GM12878 (cell line): ENCODE measurements at regions of chr9 and their contacts with region 1.

Region 1: DNA sequence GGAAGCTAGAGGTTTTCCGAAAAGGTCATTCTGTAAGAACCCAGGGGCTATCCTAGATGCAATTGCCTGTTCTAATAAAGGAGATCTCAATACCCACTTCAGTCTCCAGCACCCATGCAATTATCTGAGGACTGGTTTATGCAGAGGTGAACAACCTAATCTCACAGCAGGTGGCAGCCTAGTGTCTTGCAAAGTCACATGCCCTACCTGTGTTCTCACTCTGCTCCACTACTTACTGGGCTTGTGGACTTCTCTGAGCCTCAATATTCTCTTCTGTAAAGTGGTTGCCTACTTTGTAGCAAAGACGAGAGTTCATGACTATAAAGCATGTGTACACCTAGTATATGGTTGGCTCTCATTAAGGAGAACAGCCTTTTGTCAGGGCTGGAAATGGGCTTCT is 21.0 kb upstream of the ALDH1B1 start:
- DNase-seq: peak; percentile 23
- ATAC-seq: peak; percentile 96
- H3K4me3 ChIP-seq: no peak overlapping the region
- H3K27ac ChIP-seq: no peak overlapping the region
- H3K4me1 ChIP-seq: no peaks in the 10 kb centered on the region
- H3K27me3 ChIP-seq: no peaks in the 10 kb centered on the region; a peak in 4 of 4 replicates
- CTCF ChIP-seq: peak; percentile 60 to 80 (median 64); a peak in 5 of 6 replicates
- EP300 ChIP-seq: no peak
- POLR2A ChIP-seq: no peak
- RAD21 ChIP-seq: peak; percentile 77

Region 2: DNA sequence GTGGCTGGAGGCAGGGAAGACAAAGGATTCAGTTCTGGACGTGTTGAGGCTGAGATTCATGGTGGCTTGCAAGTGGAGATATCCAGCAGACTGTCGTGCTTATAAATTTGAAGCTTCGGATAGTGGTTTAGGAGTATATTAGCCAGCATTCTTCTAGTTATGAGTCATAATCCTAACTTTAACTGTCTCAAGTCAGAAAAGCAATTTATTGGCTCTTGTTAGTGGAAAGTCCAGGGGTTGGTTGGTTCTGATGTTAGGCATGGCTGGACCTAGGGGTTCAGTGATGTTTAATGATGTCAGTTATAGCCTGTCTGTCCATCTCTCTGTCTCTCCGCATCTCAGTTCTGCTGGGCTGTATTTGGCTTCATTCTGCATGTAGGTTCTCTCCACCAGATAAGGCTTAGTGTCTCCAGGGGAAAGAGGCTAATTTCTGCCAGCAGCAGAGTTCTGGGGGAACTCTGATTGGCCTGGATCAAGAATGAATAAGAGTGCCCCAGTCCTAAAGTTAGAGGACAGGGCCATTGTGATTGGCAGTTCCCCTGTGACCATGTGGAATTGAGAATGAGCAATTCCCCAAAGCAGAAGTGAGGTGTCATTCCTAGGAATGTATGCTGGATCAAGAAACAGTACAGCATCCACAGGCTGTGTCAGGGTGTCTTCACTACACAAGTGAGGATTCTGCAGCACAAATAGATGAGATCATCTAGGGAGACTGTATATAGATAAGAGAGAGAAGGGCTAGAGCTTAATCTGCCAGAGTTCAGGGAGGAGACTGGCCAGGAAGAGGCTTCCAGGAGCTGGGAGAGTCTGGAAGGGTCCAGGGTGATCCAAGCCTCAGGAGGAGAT is 229.5 kb before region 1 on chr9:
- CTCF ChIA-PET with region 1: no interaction called
- POLR2A ChIA-PET with region 1: no interaction called
- RAD21 ChIA-PET with region 1: no interaction called
- SMC1A ChIA-PET with region 1: no interaction called
- in situ Hi-C with region 1: no loop called
- intact Hi-C with region 1: no loop called
- DNase-seq: no peak
- ATAC-seq: peak; percentile 76
- H3K4me3 ChIP-seq: no peak overlapping the region
- H3K27ac ChIP-seq: no peak overlapping the region
- H3K4me1 ChIP-seq: no peaks in the 10 kb centered on the region
- H3K27me3 ChIP-seq: peaks cover 0 to 1% of the 10 kb centered on the region in 2 experiments; a peak in 1 of 4 replicates
- CTCF ChIP-seq: no peak
- EP300 ChIP-seq: 0 out of 4 replicates have a peak, but pooled peaks of 1 of the 2 experiments have one; percentile 39
- POLR2A ChIP-seq: no peak
- RAD21 ChIP-seq: no peak

Region 3: GRCh38 chr9:38311382-38312270 is 59.9 kb before region 1 on chr9:
- CTCF ChIA-PET with region 1: no interaction called
- POLR2A ChIA-PET with region 1: no interaction called
- RAD21 ChIA-PET with region 1: no interaction called
- SMC1A ChIA-PET with region 1: no interaction called
- in situ Hi-C with region 1: no loop called
- intact Hi-C with region 1: no loop called
- DNase-seq: no peak
- ATAC-seq: no peak
- H3K4me3 ChIP-seq: no peak overlapping the region
- H3K27ac ChIP-seq: no peak overlapping the region
- H3K4me1 ChIP-seq: no peaks in the 10 kb centered on the region
- H3K27me3 ChIP-seq: no peaks in the 10 kb centered on the region; a peak in 2 of 4 replicates
- CTCF ChIP-seq: no peak
- EP300 ChIP-seq: no peak
- POLR2A ChIP-seq: no peak
- RAD21 ChIP-seq: no peak

Region 4: DNA sequence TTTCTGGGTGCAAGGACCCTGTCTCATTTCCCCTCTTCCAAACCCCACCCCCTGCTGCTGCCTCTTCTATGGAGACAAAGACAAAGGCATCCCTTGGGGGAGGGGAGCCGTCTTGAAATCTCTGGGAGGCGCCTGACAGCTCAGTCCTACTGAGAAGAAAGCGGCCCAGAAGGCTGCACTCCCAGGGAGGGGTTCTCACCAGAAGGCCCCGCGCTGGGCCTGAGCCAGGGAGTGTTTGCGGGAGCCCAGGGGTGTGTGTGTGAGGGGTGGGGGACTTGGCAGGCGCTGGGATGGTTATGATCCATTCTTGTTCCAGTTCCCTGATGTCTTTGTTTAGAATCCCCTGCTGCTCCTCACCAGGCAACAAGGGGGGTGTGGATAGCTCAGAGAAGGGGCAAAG is 24.7 kb before region 1 on chr9:
- CTCF ChIA-PET with region 1: no interaction called
- POLR2A ChIA-PET with region 1: no interaction called
- RAD21 ChIA-PET with region 1: no interaction called
- SMC1A ChIA-PET with region 1: no interaction called
- in situ Hi-C with region 1: no loop called
- intact Hi-C with region 1: no loop called
- DNase-seq: no peak
- ATAC-seq: no peak
- H3K4me3 ChIP-seq: no peak overlapping the region
- H3K27ac ChIP-seq: no peak overlapping the region
- H3K4me1 ChIP-seq: no peaks in the 10 kb centered on the region
- H3K27me3 ChIP-seq: no peaks in the 10 kb centered on the region; a peak in 1 of 4 replicates
- CTCF ChIP-seq: no peak
- EP300 ChIP-seq: no peak
- POLR2A ChIP-seq: no peak
- RAD21 ChIP-seq: no peak

Region 5: GRCh38 chr9:38392235-38393127 is 21.0 kb after region 1 on chr9 and contains the start of gene ALDH1B1:
- CTCF ChIA-PET with region 1: interaction called, 14 read pairs
- POLR2A ChIA-PET with region 1: interaction called, 5 read pairs
- RAD21 ChIA-PET with region 1: interaction called, 5 read pairs
- SMC1A ChIA-PET with region 1: interaction called, 9 read pairs
- in situ Hi-C with region 1: no loop called
- intact Hi-C with region 1: no loop called
- DNase-seq: peak; percentile 38
- ATAC-seq: peak; percentile 98
- H3K4me3 ChIP-seq: peak within 1 kb of the TSS; percentile 93
- H3K27ac ChIP-seq: peak within 1 kb of the TSS; percentile 77
- H3K4me1 ChIP-seq: peaks cover 3% of the 10 kb centered on the region; the same call in 1 of the 2 replicates
- H3K27me3 ChIP-seq: no peaks in the 10 kb centered on the region
- CTCF ChIP-seq: peak; percentile 10 to 23 (median 16); a peak in 2 of 6 replicates
- EP300 ChIP-seq: no peak
- POLR2A ChIP-seq: peak; percentile 74
- RAD21 ChIP-seq: no peak
- polyA plus RNA-seq, gene ALDH1B1: 8.6 to 14.2 TPM

Region 6: GRCh38 chr9:38405785-38406184 is 34.3 kb after region 1 on chr9:
- CTCF ChIA-PET with region 1: interaction called, 13 read pairs
- POLR2A ChIA-PET with region 1: no interaction called
- RAD21 ChIA-PET with region 1: interaction called, 17 read pairs
- SMC1A ChIA-PET with region 1: interaction called, 9 read pairs
- in situ Hi-C with region 1: no loop called
- intact Hi-C with region 1: loop called (anchors 1 kb)
- DNase-seq: no peak
- ATAC-seq: no peak
- H3K4me3 ChIP-seq: no peak overlapping the region
- H3K27ac ChIP-seq: no peak overlapping the region
- H3K4me1 ChIP-seq: peaks cover 3% of the 10 kb centered on the region; the same call in 1 of the 2 replicates
- H3K27me3 ChIP-seq: no peaks in the 10 kb centered on the region; a peak in 3 of 4 replicates
- CTCF ChIP-seq: no peak
- EP300 ChIP-seq: no peak
- POLR2A ChIP-seq: no peak
- RAD21 ChIP-seq: no peak

Region 7: GRCh38 chr9:38432922-38433510 is 61.5 kb after region 1 on chr9:
- CTCF ChIA-PET with region 1: interaction called, 9 read pairs
- POLR2A ChIA-PET with region 1: no interaction called
- RAD21 ChIA-PET with region 1: interaction called, 8 read pairs
- SMC1A ChIA-PET with region 1: interaction called, 5 read pairs
- in situ Hi-C with region 1: no loop called
- intact Hi-C with region 1: loop called (anchors 1 kb)
- DNase-seq: no peak
- ATAC-seq: peak; percentile 72
- H3K4me3 ChIP-seq: no peak overlapping the region
- H3K27ac ChIP-seq: no peak overlapping the region
- H3K4me1 ChIP-seq: no peaks in the 10 kb centered on the region
- H3K27me3 ChIP-seq: no peaks in the 10 kb centered on the region; a peak in 1 of 4 replicates
- CTCF ChIP-seq: peak; percentile 52 to 61 (median 60)
- EP300 ChIP-seq: no peak
- POLR2A ChIP-seq: no peak
- RAD21 ChIP-seq: peak; percentile 50

Region 8: GRCh38 chr9:38641985-38642864 is 270.7 kb after region 1 on chr9:
- CTCF ChIA-PET with region 1: no interaction called
- POLR2A ChIA-PET with region 1: no interaction called
- RAD21 ChIA-PET with region 1: no interaction called
- SMC1A ChIA-PET with region 1: no interaction called
- in situ Hi-C with region 1: no loop called
- intact Hi-C with region 1: no loop called
- DNase-seq: no peak
- ATAC-seq: peak; percentile 89
- H3K4me3 ChIP-seq: no peak overlapping the region
- H3K27ac ChIP-seq: no peak overlapping the region
- H3K4me1 ChIP-seq: no peaks in the 10 kb centered on the region
- H3K27me3 ChIP-seq: no peaks in the 10 kb centered on the region
- CTCF ChIP-seq: peak; percentile 30 to 54 (median 37); a peak in 5 of 6 replicates
- EP300 ChIP-seq: no peak
- POLR2A ChIP-seq: no peak
- RAD21 ChIP-seq: peak; percentile 65

Region 9: DNA sequence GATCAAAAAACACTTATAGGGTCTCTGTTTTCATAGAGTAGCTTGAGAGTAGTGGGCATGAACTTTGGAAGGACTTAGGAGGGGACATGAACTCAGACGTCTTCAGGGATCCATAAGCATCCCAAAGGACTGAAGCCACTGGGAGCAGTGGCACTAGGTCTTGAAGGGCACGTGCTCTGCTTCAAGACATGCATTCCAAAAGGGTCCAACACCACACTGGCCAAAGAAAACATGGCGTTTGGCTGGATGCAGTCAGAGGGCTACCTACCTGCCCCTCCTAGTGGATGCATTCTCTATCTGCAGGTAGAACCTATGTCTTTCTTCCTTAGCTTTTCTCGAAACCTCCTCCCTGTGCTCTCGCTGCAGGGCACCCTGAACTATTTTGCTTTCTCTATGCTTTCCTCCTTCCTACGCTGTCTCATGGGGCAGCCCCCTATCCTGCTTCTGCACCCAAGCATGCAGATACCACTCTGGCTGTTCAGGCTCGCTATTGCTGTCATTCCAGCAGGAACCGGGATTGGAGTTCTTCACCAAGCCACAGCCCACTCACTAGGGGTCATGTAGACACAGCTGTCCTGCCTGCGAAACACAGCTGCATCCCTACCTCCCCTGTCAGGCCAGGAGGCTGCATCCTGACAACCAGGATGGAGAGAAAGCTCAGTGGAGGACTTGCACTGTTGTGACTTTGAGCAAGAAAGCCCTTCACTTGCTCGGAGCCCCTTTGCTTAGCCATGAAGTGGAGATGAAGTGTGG is 336.6 kb after region 1 on chr9:
- CTCF ChIA-PET with region 1: no interaction called
- POLR2A ChIA-PET with region 1: no interaction called
- RAD21 ChIA-PET with region 1: no interaction called
- SMC1A ChIA-PET with region 1: no interaction called
- in situ Hi-C with region 1: loop called (anchors 10 kb)
- intact Hi-C with region 1: no loop called
- DNase-seq: no peak
- ATAC-seq: peak; percentile 75
- H3K4me3 ChIP-seq: no peak overlapping the region
- H3K27ac ChIP-seq: no peak overlapping the region
- H3K4me1 ChIP-seq: no peaks in the 10 kb centered on the region
- H3K27me3 ChIP-seq: no peaks in the 10 kb centered on the region
- CTCF ChIP-seq: peak; percentile 33 to 53 (median 37); a peak in 5 of 6 replicates
- EP300 ChIP-seq: no peak
- POLR2A ChIP-seq: no peak
- RAD21 ChIP-seq: peak; percentile 40